Activated naive CD4-positive, alpha-beta T cell treated with anti-CD3 and anti-CD28 coated beads for 36 hours (primary cell): ENCODE measurements at regions of chr12 and their contacts with region 1.

Region 1: GRCh38 chr12:93677195-93678064 is at the start of gene CRADD:
- DNase-seq: peak; percentile 92
- H3K4me3 Mint-ChIP-seq: peak within 1 kb of the TSS; percentile 89
- H3K27ac Mint-ChIP-seq: peak within 1 kb of the TSS; percentile 99
- H3K4me1 Mint-ChIP-seq: peaks cover 40% of the 10 kb centered on the region
- H3K27me3 Mint-ChIP-seq: peaks cover 9% of the 10 kb centered on the region
- total RNA-seq, gene CRADD: 14.3 to 15.6 TPM

Region 2: DNA sequence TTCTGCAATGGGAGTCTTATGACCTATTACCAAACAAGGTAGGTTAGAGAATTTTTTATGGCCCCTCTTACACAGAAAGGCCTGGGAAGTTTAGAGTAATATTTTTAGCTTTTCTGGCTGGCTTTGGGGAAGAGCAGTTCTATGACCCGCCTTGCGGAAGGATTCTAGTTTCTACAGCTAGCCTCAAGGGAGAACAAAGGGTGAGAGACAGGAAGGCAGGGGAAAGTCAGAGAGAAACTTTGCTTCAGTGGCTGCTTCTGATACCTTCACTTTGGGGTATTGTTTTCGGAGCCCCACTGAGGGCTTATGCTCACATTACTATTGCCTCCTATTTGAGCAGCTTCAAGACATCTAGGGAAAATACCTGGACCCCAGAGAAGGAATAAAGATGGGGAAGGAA is 380.4 kb before region 1 on chr12:
- CTCF ChIA-PET with region 1: no interaction called
- intact Hi-C with region 1: no loop called
- DNase-seq: no peak
- H3K4me3 Mint-ChIP-seq: no peak overlapping the region
- H3K27ac Mint-ChIP-seq: no peak overlapping the region
- H3K4me1 Mint-ChIP-seq: peaks cover 5% of the 10 kb centered on the region
- H3K27me3 Mint-ChIP-seq: no peaks in the 10 kb centered on the region

Region 3: GRCh38 chr12:93441617-93442410 is 235.6 kb before region 1 on chr12 and contains the start of gene UBE2N:
- CTCF ChIA-PET with region 1: no interaction called
- intact Hi-C with region 1: loop called (anchors 1 kb)
- DNase-seq: peak; percentile 96
- H3K4me3 Mint-ChIP-seq: peak within 1 kb of the TSS; percentile 95
- H3K27ac Mint-ChIP-seq: peak within 1 kb of the TSS; percentile 94
- H3K4me1 Mint-ChIP-seq: peaks cover 46% of the 10 kb centered on the region
- H3K27me3 Mint-ChIP-seq: no peaks in the 10 kb centered on the region
- total RNA-seq, gene UBE2N: 143 TPM

Region 4: DNA sequence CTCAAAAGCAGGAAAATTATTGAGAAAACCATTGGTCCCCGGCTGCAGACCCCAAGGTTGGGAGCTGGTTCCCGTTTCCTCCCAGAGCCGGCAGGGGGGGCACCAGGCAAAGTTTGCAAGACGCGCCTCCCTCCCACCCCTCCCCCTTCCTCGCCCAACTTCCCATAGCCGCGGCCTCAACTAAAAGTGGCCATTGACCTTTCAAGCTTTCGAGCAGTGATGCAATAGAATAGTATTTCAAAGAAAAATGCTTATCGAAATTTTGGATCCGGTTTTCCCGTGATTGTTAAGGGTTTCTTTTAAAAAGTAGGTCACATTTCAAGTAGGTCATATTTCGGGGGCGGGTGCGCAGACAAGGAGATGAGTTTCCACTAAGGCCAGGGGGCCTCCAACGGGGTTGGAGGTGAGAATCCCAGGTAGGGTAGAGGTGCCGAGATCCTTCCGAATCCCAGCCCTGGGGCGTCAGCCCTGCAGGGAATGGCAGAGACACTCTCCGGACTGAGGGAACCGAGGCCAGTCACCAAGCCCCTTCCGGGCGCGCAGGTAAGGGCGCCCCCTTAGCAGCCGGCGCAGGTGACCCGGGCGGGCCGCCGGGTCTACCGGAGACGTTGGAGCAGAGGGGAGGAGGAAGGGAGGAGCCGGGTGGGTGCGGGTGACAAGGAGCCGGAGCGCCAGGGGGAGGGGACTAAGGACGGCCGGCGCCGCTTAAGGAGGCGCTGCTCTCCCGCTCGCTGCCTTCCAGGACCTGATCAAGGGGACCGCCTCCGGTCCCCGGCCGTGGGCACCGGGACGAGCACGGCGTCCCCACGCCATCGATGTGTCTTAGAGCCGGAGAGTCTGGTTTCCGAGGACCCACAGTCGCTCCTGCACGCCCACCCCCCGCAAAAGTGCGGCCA is 107.5 kb before region 1 on chr12:
- CTCF ChIA-PET with region 1: interaction called, 4 read pairs
- intact Hi-C with region 1: loop called (anchors 1 kb)
- DNase-seq: peak; percentile 88
- H3K4me3 Mint-ChIP-seq: peak overlapping the region; percentile 83
- H3K27ac Mint-ChIP-seq: peak overlapping the region; percentile 81
- H3K4me1 Mint-ChIP-seq: peaks cover 15% of the 10 kb centered on the region
- H3K27me3 Mint-ChIP-seq: peaks cover 17% of the 10 kb centered on the region

Region 5: GRCh38 chr12:93603762-93604161 is 73.7 kb before region 1 on chr12:
- CTCF ChIA-PET with region 1: no interaction called
- intact Hi-C with region 1: no loop called
- DNase-seq: no peak
- H3K4me3 Mint-ChIP-seq: no peak overlapping the region
- H3K27ac Mint-ChIP-seq: no peak overlapping the region
- H3K4me1 Mint-ChIP-seq: no peaks in the 10 kb centered on the region
- H3K27me3 Mint-ChIP-seq: peaks cover 10% of the 10 kb centered on the region

Region 6: GRCh38 chr12:93699271-93700145 is 22.1 kb after region 1 on chr12:
- CTCF ChIA-PET with region 1: no interaction called
- intact Hi-C with region 1: loop called (anchors 1 kb)
- DNase-seq: no peak
- H3K4me3 Mint-ChIP-seq: no peak overlapping the region
- H3K27ac Mint-ChIP-seq: no peak overlapping the region
- H3K4me1 Mint-ChIP-seq: peaks cover 37% of the 10 kb centered on the region
- H3K27me3 Mint-ChIP-seq: no peaks in the 10 kb centered on the region

Region 7: GRCh38 chr12:93773122-93773871 is 95.9 kb after region 1 on chr12:
- CTCF ChIA-PET with region 1: no interaction called
- intact Hi-C with region 1: loop called (anchors 2 kb)
- DNase-seq: peak; percentile 87
- H3K4me3 Mint-ChIP-seq: peak overlapping the region; percentile 71
- H3K27ac Mint-ChIP-seq: peak overlapping the region; percentile 86
- H3K4me1 Mint-ChIP-seq: peaks cover 39% of the 10 kb centered on the region
- H3K27me3 Mint-ChIP-seq: no peaks in the 10 kb centered on the region

Region 8: DNA sequence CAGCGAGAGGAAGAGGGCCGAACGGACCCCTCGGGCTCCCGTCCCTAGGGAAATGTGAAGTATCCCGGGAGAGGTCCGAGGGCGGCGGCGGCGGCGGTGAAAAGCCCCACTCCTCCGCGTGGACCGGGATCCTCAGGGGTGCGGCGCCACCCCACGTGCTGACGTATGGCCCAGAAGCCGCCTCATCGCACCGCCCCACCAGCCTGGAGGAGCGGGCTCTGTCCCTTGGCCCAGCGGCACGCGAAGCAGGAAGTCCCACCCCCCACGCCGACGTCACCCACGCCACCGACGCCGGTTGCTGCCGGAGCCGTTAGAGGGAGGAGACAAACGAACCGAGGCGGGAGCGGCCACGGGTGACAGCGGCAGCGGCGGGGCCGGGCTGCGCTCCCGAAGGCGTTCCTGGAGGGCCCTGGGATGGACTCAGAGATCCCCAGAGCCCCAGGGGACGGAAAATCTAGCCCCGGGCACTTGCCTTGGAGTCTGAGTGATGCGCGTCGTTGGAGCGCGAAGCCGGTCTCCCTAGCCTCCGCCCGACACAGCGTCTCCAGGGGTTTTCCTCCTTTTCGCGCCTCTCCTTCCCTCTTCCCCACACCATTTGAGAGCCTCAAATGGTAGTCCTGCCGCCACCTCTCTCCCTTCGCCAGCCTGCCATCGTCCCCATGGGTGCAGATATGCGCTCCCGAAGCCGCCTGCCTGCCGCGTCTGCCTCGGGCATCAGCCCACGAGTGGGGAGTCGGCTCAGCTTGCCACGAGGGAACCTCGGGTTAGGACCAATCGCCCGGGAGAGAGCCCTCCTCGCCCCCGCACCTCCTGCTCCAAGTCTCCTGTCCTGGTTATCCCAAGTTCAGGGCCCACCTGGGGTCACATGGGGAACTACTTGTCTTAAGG is 782.5 kb after region 1 on chr12 and contains the start of gene CEP83:
- CTCF ChIA-PET with region 1: no interaction called
- intact Hi-C with region 1: loop called (anchors 5 kb)
- DNase-seq: peak; percentile 98
- H3K4me3 Mint-ChIP-seq: peak within 1 kb of the TSS; percentile 97
- H3K27ac Mint-ChIP-seq: peak within 1 kb of the TSS; percentile 91
- H3K4me1 Mint-ChIP-seq: peaks cover 29% of the 10 kb centered on the region
- H3K27me3 Mint-ChIP-seq: peaks cover 5% of the 10 kb centered on the region
- total RNA-seq, gene CEP83: 19.0 to 21.5 TPM